ENCODE measurements at regions of chr1 and their contacts with region 1.

Region 1: GRCh38 chr1:198937231-198938031 is 298.6 kb downstream of the PTPRC start:
- DNase-seq: peak in 6 of 10 donors; percentile 34 to 87 (median 59)

Region 2: GRCh38 chr1:198699167-198700015 is 238.0 kb before region 1 on chr1:
- intact Hi-C with region 1: no loop called
- DNase-seq: peak in 9 of 10 donors; percentile 19 to 85 (median 41)

Region 3: DNA sequence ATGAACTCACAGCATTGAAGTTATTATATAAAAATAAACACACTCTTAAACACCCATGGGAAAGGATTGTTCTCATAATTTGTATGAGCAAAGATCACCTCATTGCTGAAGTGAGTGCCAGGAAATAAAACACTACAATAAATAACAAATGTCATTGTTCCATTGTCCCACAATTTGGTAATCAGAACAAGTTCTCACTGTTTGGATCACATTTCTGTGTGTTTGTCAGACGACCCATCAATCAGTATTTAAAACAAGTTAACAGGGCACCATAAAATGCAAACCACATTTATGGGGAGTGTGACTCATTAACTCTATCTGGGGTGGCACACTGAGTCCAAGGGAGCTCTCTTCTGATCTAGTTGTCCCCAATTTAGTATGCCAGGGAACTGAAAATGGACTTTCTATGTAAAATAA is 174.1 kb before region 1 on chr1:
- intact Hi-C with region 1: loop called (anchors 10 kb)
- DNase-seq: no peak

Region 4: GRCh38 chr1:198970912-198971311 is 33.5 kb after region 1 on chr1:
- intact Hi-C with region 1: no loop called
- DNase-seq: no peak

Region 5: DNA sequence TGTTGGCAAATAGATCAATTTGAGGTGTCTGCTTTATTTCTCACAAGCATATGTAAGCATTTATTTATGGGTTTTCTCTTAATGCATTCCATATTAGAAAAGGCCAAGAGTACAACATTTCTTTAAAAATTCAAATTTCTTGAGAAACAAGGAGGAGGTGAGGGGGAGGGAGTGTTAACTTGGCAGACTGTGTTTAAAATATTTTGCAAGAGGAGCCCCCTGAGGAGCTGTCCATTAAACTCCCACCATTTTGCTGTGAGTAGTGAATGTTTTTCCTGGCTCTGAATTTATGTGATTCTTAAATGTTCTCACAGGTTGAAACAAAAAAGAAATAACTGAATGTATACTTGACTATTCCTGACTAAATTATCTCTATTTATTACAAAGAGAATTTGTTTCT is 65.2 kb after region 1 on chr1:
- intact Hi-C with region 1: loop called (anchors 5 kb)
- DNase-seq: no peak

Region 6: GRCh38 chr1:199020904-199021303 is 83.5 kb after region 1 on chr1:
- intact Hi-C with region 1: no loop called
- DNase-seq: no peak

Region 7: DNA sequence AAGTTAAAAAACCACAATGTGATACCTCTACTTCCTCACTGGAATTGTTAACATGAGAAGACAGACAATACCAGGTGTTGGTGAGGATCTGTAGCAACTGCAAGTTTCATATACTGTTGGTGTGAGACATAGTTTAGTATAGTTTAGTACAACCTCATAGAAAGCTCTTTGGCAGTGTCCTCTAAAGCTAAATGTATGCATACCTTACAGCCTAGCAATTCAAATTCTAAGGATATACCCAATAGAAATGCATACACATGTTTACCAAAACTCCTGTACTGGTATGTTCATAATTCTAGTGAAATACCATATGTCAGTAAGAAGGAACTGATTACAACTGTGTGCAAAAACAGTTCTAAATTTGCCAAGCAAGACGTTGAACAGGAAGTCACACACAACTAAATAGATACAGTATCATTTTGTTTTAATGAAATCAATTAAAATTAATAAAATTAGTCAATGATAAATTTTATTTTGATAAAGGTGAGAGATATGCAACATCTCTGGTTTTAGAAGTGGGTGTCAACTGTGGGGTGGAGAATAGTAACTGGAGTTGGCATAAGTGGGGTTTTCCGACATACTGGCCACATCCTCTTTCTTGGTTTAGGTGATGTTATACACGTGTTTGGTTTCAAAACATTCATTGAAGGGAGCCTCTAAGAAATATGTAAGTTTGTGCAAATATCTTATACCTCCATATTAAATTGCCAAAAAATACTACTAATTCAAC is 152.1 kb after region 1 on chr1:
- intact Hi-C with region 1: loop called (anchors 10 kb)
- DNase-seq: no peak

Region 8: DNA sequence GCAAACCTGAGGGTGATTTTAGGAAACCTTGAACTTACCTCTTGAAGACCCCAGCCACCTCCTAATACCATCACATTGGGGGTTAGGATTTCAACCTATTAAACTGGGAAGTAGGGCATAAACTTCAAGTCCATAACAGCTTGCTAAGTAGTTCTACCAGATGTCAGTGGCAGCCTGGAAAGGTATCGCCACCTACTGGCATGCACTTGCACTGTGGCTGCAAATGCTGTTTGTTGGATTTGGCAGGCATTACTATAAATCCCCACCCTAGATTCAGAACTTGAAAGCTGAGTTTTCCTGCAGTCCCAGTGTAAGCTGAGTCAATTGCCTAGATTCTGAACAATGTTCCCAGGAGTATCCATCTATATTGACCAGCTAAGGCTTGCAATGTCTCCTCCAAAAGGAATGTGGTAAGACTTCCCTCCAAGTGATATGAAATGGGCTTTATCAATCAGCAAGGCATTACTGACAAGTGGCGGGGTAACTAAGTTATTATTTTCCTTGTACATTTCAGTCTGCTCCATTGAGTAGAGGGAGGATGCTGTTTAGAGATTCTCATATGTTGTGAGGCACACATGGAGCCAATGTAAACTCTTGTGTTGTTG is 175.9 kb after region 1 on chr1:
- intact Hi-C with region 1: loop called (anchors 10 kb)
- DNase-seq: peak; percentile 23 to 95 (median 66)